ENCODE measurements at regions of chr11 and their contacts with region 1.

Region 1: DNA sequence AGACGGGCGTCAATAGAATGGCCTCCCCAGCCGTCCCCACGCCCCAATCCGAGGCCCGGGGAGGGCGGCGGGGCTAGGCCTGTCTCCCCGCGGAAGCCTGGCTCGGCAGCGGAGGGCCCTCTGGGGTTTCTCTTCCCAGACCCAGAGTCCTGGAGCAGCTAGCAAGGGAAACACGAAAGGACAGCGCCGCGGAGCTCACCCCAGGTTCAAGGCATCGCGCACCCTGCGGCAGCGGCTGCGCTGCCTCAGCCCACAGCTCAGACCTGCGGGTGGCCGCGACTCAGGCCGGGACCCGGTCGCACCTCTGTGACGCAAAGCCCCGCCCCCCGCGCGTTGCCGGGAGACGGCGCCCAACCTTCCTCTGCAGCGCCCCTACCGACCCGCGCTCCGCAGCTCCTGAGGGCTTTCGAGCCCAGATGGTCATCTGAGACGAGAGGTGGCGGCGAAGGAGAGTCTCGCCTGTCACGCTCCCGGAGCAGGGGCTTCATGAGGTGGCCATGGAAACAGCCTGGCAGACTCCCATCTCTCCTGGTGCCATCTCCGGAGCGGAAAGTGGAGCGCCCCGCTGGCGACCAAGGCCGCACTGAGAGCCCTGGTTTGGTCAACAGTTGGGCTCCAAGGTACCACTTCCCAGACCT is at the start of gene RNF141:
- DNase-seq: peak; percentile 95
- ATAC-seq: peak; percentile 97
- H3K4me3 Mint-ChIP-seq: peak within 1 kb of the TSS; percentile 84
- H3K27ac Mint-ChIP-seq: peak within 1 kb of the TSS; percentile 78
- H3K4me1 Mint-ChIP-seq: peaks cover 21% of the 10 kb centered on the region
- H3K27me3 Mint-ChIP-seq: peaks cover under 1% of the 10 kb centered on the region
- total RNA-seq, gene RNF141: 9.4 to 10.1 TPM

Region 2: DNA sequence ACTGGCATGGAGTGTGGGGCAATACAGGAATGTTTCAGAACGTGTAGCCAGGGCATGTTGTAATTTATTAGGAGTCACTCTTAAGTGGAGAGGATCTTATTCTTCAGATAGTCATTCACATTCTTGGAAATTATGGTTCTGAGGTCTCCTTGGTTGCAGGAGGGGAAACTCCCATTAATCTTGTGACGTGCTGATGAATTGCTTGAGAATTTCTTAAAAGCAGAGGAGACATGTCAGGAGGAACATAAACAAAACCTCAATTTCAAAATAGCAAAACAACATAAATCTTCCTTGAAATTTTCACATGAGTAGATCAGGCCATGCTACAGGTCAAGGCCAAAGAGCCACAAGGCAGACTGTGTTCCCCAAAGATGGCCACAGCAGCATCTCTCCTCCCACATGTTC is 185.8 kb before region 1 on chr11:
- CTCF ChIA-PET with region 1: no interaction called
- DNase-seq: no peak
- ATAC-seq: no peak
- H3K4me3 Mint-ChIP-seq: no peak overlapping the region
- H3K27ac Mint-ChIP-seq: no peak overlapping the region
- H3K4me1 Mint-ChIP-seq: no peaks in the 10 kb centered on the region
- H3K27me3 Mint-ChIP-seq: peaks cover 35% of the 10 kb centered on the region

Region 3: DNA sequence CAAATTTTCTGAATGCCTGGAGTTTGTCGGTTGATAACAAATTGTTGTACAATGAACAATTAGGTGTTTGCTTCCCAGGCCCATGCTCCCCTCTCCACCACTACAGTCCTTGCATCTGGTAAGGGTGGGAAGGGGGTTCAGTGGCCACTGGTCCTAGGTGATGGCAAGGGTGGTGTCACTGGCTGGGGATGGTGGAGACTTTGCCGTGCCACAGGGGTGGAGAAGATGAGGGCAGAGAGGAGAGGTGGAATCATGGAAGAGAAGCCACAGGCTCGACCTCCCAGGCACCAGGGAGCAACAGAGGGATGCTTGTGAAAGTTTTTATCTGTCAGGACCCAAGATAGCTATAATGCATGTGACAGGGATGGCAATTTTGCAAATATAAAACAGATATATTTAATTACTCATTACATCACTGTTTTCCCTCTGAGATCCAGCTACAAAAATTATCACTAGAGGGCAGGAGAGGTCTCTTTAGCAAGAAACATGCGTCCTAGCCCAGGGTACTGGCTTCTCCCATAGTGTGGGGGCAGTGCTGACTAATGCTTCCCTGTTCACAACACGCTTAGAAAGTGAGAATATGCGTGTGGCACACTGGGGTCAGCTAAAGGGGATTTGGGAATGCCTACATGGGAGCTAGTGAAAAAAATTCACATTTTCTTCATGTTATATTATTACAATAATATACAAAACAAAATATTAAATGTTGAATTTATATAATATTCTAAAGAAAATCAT is 135.0 kb before region 1 on chr11:
- CTCF ChIA-PET with region 1: interaction called, 26 read pairs
- DNase-seq: peak; percentile 58
- ATAC-seq: peak; percentile 77
- H3K4me3 Mint-ChIP-seq: no peak overlapping the region
- H3K27ac Mint-ChIP-seq: no peak overlapping the region
- H3K4me1 Mint-ChIP-seq: peaks cover 16% of the 10 kb centered on the region
- H3K27me3 Mint-ChIP-seq: no peaks in the 10 kb centered on the region

Region 4: DNA sequence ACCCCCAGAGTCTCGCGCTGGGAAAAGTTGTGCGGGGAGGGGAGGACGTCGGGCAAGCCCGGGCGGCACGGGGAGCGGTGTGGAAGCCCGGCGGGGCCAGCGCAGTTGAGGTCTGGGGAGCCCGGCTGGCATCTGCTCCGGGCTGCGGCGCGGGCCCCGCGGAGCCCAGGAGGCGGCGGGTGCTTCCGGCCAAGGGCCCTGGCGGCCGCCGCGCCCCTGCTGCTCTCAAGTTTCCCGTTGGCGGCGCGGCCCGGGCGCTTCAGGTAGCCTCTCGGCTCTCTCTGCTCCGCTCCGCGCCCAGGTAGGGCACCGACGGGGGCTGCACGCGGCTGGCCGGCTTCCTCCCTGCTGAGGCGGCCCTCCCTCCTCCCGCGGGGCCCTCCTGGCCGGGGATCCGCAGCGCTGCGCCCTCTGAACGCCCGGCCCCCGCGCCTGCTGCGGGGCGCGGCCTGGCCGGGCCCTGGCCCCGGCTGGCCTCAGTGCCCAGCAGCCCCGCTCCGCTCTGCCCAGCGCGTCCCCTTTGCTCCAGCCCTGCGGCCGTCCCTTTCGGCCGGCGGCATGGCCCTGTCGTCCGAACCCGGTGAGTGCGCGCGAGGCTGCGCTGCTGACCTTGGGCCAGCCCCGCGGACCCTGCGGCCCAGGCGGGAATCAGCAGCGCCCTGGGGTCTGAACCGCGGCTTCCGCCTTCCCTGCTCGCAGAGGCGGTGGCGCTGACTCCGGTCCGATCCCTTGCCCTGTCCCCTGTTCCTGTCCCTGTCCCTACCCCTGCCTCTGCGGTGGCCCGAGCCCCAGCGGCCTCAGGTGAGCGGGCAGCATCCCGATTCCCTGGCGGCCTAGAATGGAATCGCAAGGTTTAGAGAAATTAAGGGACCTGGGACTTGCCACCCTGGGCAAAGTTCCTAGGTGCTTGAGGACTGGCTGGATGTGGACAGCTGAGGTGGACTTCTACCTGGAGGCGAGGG is 90.3 kb before region 1 on chr11:
- CTCF ChIA-PET with region 1: interaction called, 24 read pairs
- DNase-seq: peak; percentile 54
- ATAC-seq: peak; percentile 86
- H3K4me3 Mint-ChIP-seq: peak overlapping the region; percentile 70
- H3K27ac Mint-ChIP-seq: peak overlapping the region; percentile 70
- H3K4me1 Mint-ChIP-seq: peaks cover 44% of the 10 kb centered on the region
- H3K27me3 Mint-ChIP-seq: peaks cover 20% of the 10 kb centered on the region

Region 5: GRCh38 chr11:10522276-10522675 is 18.8 kb before region 1 on chr11:
- CTCF ChIA-PET with region 1: interaction called, 16 read pairs
- DNase-seq: no peak
- ATAC-seq: no peak
- H3K4me3 Mint-ChIP-seq: no peak overlapping the region
- H3K27ac Mint-ChIP-seq: no peak overlapping the region
- H3K4me1 Mint-ChIP-seq: peaks cover 9% of the 10 kb centered on the region
- H3K27me3 Mint-ChIP-seq: no peaks in the 10 kb centered on the region

Region 6: GRCh38 chr11:10592331-10592730 is 51.3 kb after region 1 on chr11:
- CTCF ChIA-PET with region 1: no interaction called
- DNase-seq: no peak
- ATAC-seq: no peak
- H3K4me3 Mint-ChIP-seq: no peak overlapping the region
- H3K27ac Mint-ChIP-seq: no peak overlapping the region
- H3K4me1 Mint-ChIP-seq: peaks cover 17% of the 10 kb centered on the region
- H3K27me3 Mint-ChIP-seq: peaks cover 18% of the 10 kb centered on the region

Region 7: DNA sequence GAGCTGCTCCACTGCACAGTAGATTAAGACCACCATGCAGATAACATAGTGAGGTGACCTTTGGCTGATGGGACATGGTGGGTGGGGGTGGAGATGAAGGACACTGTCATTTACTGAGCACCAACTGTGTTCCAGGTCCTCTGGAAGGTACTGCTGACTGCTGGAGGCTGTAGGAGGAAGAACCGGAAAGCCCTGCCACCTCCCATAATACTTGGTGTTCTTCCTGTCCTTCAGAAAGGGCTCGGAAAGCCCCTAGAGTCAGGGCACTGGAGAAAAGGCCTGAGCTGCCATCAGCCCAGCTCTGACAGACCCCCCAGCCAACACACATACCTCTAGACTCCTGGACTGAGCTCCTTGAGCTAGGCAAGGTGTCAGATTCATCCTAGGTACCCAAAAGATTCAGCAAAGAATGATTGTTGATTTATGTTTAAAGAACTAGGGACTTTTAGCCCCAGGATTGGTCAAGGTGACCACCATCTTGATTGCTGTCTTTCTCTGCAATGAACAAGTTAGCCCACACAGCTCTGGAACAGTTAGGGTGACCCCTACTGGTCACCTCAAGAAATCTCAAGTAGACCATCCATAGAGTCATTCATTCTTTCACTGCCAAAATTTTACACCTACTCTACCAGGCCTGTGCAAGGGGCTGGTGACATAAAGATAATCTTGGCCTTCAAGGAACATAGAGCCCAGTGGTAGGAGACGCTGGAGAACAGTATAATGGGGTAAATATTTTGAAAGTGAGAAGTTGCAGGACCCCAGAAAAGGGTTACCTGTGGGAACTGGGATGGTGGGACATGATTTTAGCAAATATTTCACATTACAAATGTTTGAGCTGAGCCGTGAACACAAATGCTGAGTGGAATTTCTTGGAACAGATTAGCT is 113.1 kb after region 1 on chr11:
- CTCF ChIA-PET with region 1: interaction called, 11 read pairs
- DNase-seq: peak; percentile 48
- ATAC-seq: peak; percentile 77
- H3K4me3 Mint-ChIP-seq: no peak overlapping the region
- H3K27ac Mint-ChIP-seq: no peak overlapping the region
- H3K4me1 Mint-ChIP-seq: peaks cover 37% of the 10 kb centered on the region
- H3K27me3 Mint-ChIP-seq: no peaks in the 10 kb centered on the region